Colonic mucosa (tissue), 4 donors: ENCODE measurements at regions of chr3 and their contacts with region 1.

Region 1: GRCh38 chr3:161220850-161221753 is at the start of gene NMD3:
- DNase-seq: peak; percentile 97
- H3K4me3 ChIP-seq: peak within 1 kb of the TSS; percentile 88
- H3K27ac ChIP-seq: peak within 1 kb of the TSS; percentile 81
- H3K4me1 ChIP-seq: peaks cover 7% of the 10 kb centered on the region
- H3K27me3 ChIP-seq: no peaks in the 10 kb centered on the region
- CTCF ChIP-seq: no peak
- total RNA-seq, gene NMD3: 33.5 to 45.5 TPM

Region 2: GRCh38 chr3:160565442-160566403 is 655.4 kb before region 1 on chr3 and contains the start of gene KPNA4:
- intact Hi-C with region 1: loop called (anchors 10 kb)
- DNase-seq: peak; percentile 98
- H3K4me3 ChIP-seq: peak within 1 kb of the TSS; percentile 70
- H3K27ac ChIP-seq: peak within 1 kb of the TSS; percentile 96
- H3K4me1 ChIP-seq: peaks cover 10% of the 10 kb centered on the region
- H3K27me3 ChIP-seq: no peaks in the 10 kb centered on the region
- CTCF ChIP-seq: no peak
- total RNA-seq, gene KPNA4: 41.6 to 60.6 TPM

Region 3: GRCh38 chr3:160931474-160931873 is 289.6 kb before region 1 on chr3:
- intact Hi-C with region 1: no loop called
- DNase-seq: no peak
- H3K4me3 ChIP-seq: no peak overlapping the region
- H3K27ac ChIP-seq: no peak overlapping the region
- H3K4me1 ChIP-seq: no peaks in the 10 kb centered on the region
- H3K27me3 ChIP-seq: no peaks in the 10 kb centered on the region
- CTCF ChIP-seq: no peak